Activated CD8-positive, alpha-beta memory T cell treated with anti-CD3 and anti-CD28 coated beads, Interleukin-2, amount 10 ng/mL, durations not matched to agents 7 days and 5 days (primary cell): ENCODE measurements at regions of chr16 and their contacts with region 1.

Region 1: DNA sequence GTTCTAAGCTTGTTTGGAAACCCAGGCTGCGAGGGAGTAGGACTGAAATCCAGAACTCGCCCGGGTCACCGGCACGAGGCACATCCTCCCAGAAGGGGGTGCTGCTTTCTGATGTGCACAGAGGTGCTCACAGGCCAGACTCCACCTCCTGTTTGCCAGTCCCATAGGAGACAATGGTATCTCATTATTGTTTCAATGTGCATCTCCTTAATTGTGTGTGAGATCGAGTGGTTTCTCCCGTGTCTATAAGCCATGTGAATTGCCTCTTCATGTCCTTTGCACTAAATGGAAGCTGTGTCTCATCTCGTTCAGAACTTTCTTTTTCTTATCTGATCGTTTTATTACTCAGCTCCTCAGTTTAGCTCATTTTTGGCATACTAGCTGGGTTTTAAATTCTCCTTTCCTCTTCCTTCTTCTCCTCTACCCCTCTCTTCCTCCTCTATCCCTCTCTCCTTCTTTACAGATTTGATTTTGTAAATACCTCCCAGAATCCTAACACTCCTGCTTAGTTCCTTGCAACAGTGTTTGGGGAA is 32.1 kb upstream of the PRKCB start:
- DNase-seq: peak; percentile 86
- ATAC-seq: peak; percentile 96
- H3K4me3 Mint-ChIP-seq: peak overlapping the region; percentile 25
- H3K27ac Mint-ChIP-seq: no peak overlapping the region
- H3K4me1 Mint-ChIP-seq: peaks cover 16% of the 10 kb centered on the region
- H3K27me3 Mint-ChIP-seq: peaks cover 5% of the 10 kb centered on the region

Region 2: DNA sequence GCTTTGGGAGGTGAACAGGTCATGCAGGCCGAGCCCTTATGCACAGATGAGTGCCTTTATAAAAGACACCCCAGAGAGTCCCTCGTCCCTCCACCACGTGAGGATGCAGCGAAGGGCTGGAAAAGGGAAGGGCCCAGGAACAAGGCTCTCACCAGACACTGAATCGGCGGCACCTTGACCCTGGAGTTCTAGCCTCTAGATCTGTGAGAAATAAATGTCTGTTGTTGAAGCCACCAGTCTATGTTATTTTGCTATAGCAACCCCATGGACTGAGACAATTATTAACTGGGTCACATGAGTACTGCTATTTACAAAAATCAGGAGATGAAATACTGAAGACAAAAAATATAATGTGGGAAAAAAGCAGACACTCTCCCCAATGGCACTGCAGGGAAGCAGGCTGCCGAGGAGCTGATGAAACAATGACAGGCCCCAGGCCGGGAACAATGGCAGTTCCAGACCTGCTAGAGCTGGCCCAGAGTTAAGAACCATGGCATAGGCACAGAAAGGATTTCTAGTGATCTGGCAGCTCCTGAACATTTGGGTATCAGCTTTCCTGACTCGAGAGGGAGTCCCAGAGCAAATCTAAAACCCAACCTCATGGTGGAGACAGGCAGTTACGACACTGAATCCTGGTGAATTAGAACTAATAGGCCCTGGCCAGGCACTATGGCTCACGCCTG is 275.6 kb before region 1 on chr16:
- CTCF ChIA-PET with region 1: no interaction called
- DNase-seq: no peak
- ATAC-seq: no peak
- H3K4me3 Mint-ChIP-seq: no peak overlapping the region
- H3K27ac Mint-ChIP-seq: peak overlapping the region; percentile 8
- H3K4me1 Mint-ChIP-seq: no peaks in the 10 kb centered on the region
- H3K27me3 Mint-ChIP-seq: no peaks in the 10 kb centered on the region

Region 3: GRCh38 chr16:23836404-23837311 is 33.0 kb after region 1 on chr16:
- CTCF ChIA-PET with region 1: interaction called, 27 read pairs
- DNase-seq: peak; percentile 79
- ATAC-seq: peak; percentile 48
- H3K4me3 Mint-ChIP-seq: peak overlapping the region; percentile 99
- H3K27ac Mint-ChIP-seq: peak overlapping the region; percentile 92
- H3K4me1 Mint-ChIP-seq: peaks cover 55% of the 10 kb centered on the region
- H3K27me3 Mint-ChIP-seq: no peaks in the 10 kb centered on the region

Region 4: GRCh38 chr16:24010440-24011089 is 206.9 kb after region 1 on chr16:
- CTCF ChIA-PET with region 1: interaction called, 239 read pairs
- DNase-seq: peak; percentile 87
- ATAC-seq: peak; percentile 69
- H3K4me3 Mint-ChIP-seq: no peak overlapping the region
- H3K27ac Mint-ChIP-seq: no peak overlapping the region
- H3K4me1 Mint-ChIP-seq: peaks cover 53% of the 10 kb centered on the region
- H3K27me3 Mint-ChIP-seq: no peaks in the 10 kb centered on the region

Region 5: GRCh38 chr16:24041826-24042631 is 238.4 kb after region 1 on chr16:
- CTCF ChIA-PET with region 1: interaction called, 108 read pairs
- DNase-seq: peak; percentile 87
- ATAC-seq: peak; percentile 94
- H3K4me3 Mint-ChIP-seq: no peak overlapping the region
- H3K27ac Mint-ChIP-seq: no peak overlapping the region
- H3K4me1 Mint-ChIP-seq: peaks cover 7% of the 10 kb centered on the region
- H3K27me3 Mint-ChIP-seq: no peaks in the 10 kb centered on the region